ENCODE measurements at regions of chr4 and their contacts with region 1.

Region 1: DNA sequence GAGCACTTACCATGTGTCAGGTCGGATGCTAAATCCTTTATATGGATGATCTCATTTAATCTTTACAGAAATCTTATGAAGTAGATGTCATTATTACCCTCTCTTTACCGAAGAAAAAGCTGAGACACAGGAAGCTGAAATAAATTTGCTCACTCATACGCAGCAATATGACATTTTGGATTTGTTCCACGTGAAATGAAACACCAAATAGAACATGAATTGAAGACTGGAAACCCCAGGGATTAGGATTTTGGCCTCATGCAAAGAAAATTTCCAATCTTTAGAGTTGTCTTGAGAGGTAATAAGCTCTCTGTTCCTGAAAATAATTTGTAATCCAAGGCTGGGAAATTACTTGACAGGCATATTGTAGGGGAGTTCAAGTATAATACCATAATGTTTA is 354.4 kb upstream of the CLNK start:
- DNase-seq: no peak
- ATAC-seq: no peak

Region 2: GRCh38 chr4:11079171-11079570 is 40.2 kb after region 1 on chr4:
- intact Hi-C with region 1: loop called (anchors 5 kb)
- DNase-seq: no peak
- ATAC-seq: peak; percentile 43

Measured in Right ventricle myocardium superior (tissue), 1 donor.